Breast epithelium (tissue), 4 donors: ENCODE measurements at regions of chr13 and their contacts with region 1.

Region 1: GRCh38 chr13:56700324-56700723 is 440.4 kb upstream of the PRR20A start:
- DNase-seq: no peak
- H3K4me3 ChIP-seq: no peak overlapping the region
- H3K27ac ChIP-seq: no peak overlapping the region
- H3K4me1 ChIP-seq: no peaks in the 10 kb centered on the region
- H3K27me3 ChIP-seq: no peaks in the 10 kb centered on the region
- CTCF ChIP-seq: no peak
- POLR2A ChIP-seq: no peak

Region 2: GRCh38 chr13:55566334-55566733 is 1134.0 kb before region 1 on chr13:
- intact Hi-C with region 1: no loop called
- DNase-seq: no peak
- H3K4me3 ChIP-seq: no peak overlapping the region
- H3K27ac ChIP-seq: no peak overlapping the region
- H3K4me1 ChIP-seq: no peaks in the 10 kb centered on the region
- H3K27me3 ChIP-seq: no peaks in the 10 kb centered on the region
- CTCF ChIP-seq: no peak
- POLR2A ChIP-seq: no peak

Region 3: GRCh38 chr13:56586966-56587365 is 113.4 kb before region 1 on chr13:
- intact Hi-C with region 1: no loop called
- DNase-seq: no peak
- H3K4me3 ChIP-seq: no peak overlapping the region
- H3K27ac ChIP-seq: no peak overlapping the region
- H3K4me1 ChIP-seq: no peaks in the 10 kb centered on the region
- H3K27me3 ChIP-seq: no peaks in the 10 kb centered on the region
- CTCF ChIP-seq: no peak
- POLR2A ChIP-seq: no peak

Region 4: DNA sequence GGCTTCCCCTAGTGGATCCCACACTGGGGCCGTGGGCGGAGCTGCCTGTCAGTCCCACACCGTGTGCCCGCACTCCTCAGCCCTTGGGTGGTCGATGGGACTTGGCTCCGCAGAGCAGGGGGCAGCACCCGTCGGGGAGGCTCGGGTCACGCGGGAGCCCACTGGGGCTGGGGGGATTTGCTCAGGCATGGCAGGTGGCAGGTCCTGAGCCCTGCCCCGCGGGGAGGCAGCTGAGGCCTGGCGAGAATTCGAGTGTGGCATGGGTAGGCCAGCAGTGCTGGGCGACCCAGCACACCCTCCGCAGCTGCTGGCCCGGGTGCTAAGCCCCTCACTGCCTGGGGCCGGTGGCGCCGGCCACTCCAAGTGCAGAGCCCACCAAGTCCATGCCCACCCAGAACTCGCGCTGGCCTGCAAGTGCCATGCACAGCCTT is 41.3 kb before region 1 on chr13:
- intact Hi-C with region 1: loop called (anchors 5 kb)
- DNase-seq: no peak
- H3K4me3 ChIP-seq: no peak overlapping the region
- H3K27ac ChIP-seq: no peak overlapping the region
- H3K4me1 ChIP-seq: no peaks in the 10 kb centered on the region
- H3K27me3 ChIP-seq: no peaks in the 10 kb centered on the region
- CTCF ChIP-seq: no peak
- POLR2A ChIP-seq: no peak